ENCODE measurements at regions of chr5 and their contacts with region 1.

Region 1: GRCh38 chr5:139863855-139864558 is 68.4 kb downstream of the PSD2 start:
- DNase-seq: peak; percentile 12
- H3K4me3 ChIP-seq: no peak overlapping the region
- H3K27ac ChIP-seq: no peak overlapping the region
- H3K4me1 ChIP-seq: peaks cover 10% of the 10 kb centered on the region
- H3K27me3 ChIP-seq: no peaks in the 10 kb centered on the region
- CTCF ChIP-seq: peak; percentile 82 to 92

Region 2: DNA sequence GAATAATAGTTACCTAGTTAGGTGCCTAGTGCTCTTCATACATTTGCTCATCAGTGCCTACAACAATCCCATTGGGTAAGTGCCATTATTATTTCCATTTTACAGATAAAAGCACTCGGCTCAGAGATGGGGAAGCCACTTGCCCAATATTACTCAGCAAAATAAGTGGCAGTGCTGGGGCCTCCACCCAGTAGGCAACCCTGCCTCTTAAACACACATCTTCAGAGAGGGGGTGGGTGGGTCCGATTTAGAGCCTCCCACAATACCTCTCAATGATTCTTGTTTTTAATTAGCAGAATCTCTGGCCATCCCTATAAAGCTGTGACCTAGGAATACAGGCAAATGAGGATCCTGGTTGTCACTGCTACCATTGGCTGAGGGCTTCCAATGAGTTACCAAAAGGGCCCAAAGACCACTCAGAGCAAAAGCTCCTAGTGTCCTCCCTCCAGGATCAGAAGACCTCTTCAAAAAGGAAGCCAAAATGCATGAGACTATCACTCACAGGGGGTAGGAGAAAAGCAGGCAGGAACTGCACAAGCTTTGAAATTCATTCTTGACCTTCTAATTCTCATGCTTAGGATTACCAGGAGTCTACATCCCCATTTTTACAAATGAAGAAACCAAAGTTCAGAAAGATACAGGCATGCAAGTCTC is 338.9 kb before region 1 on chr5:
- CTCF ChIA-PET with region 1: no interaction called
- dilution Hi-C with region 1: no loop called
- in situ Hi-C with region 1: no loop called
- intact Hi-C with region 1: no loop called
- DNase-seq: no peak
- H3K4me3 ChIP-seq: no peak overlapping the region
- H3K27ac ChIP-seq: no peak overlapping the region
- H3K4me1 ChIP-seq: no peaks in the 10 kb centered on the region
- H3K27me3 ChIP-seq: no peaks in the 10 kb centered on the region
- CTCF ChIP-seq: no peak

Region 3: DNA sequence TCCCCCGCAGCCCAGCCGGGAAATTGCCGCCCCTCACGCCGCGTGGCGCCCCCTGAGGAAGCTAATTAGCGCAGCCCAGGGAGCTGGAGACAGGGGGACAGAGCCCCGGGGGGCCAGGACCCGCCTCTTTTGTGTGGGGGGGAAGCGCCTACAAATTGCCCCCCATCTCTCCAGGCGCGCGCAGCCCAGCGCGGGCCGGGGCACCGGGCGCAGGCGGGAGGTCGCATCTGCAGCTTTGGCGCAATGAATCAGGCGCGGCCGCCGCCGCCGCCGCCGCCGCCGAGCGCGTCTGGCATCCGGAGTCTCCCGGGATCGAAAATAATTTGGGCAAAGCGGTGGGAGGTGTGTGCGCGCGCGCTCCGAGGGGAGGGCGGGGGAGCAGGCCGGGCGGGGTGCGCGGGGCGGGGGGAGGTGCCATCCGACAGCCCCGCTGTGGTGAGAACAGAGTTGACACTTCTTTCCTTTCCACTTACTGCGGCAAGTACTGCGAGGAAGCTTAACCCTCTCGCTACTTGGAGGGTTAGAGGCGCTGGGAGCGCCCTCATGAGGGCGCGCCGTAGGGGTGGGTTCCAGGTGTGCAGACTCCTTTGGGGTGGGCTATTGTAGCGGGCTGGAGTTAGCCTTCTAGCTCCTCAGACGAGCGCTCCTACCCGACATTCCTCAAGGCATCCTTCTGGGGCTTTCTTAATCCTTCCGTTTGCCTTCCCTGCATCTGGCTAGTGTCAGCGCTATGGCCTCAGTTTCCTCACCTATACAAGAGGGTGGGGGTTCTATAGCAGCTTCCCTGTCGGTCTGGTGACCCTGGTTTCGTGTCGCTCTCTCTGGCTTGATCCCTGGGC is 152.7 kb before region 1 on chr5:
- CTCF ChIA-PET with region 1: interaction called, 15 read pairs
- dilution Hi-C with region 1: no loop called
- in situ Hi-C with region 1: no loop called
- intact Hi-C with region 1: no loop called
- DNase-seq: peak; percentile 38
- H3K4me3 ChIP-seq: peak overlapping the region; percentile 42 to 51 (median 46)
- H3K27ac ChIP-seq: no peak overlapping the region
- H3K4me1 ChIP-seq: peaks cover 11% of the 10 kb centered on the region
- H3K27me3 ChIP-seq: no peaks in the 10 kb centered on the region
- CTCF ChIP-seq: no peak

Region 4: GRCh38 chr5:139975306-139975705 is 111.3 kb after region 1 on chr5:
- CTCF ChIA-PET with region 1: no interaction called
- dilution Hi-C with region 1: no loop called
- in situ Hi-C with region 1: no loop called
- intact Hi-C with region 1: no loop called
- DNase-seq: no peak
- H3K4me3 ChIP-seq: no peak overlapping the region
- H3K27ac ChIP-seq: no peak overlapping the region
- H3K4me1 ChIP-seq: no peaks in the 10 kb centered on the region
- H3K27me3 ChIP-seq: no peaks in the 10 kb centered on the region
- CTCF ChIP-seq: no peak

Region 5: DNA sequence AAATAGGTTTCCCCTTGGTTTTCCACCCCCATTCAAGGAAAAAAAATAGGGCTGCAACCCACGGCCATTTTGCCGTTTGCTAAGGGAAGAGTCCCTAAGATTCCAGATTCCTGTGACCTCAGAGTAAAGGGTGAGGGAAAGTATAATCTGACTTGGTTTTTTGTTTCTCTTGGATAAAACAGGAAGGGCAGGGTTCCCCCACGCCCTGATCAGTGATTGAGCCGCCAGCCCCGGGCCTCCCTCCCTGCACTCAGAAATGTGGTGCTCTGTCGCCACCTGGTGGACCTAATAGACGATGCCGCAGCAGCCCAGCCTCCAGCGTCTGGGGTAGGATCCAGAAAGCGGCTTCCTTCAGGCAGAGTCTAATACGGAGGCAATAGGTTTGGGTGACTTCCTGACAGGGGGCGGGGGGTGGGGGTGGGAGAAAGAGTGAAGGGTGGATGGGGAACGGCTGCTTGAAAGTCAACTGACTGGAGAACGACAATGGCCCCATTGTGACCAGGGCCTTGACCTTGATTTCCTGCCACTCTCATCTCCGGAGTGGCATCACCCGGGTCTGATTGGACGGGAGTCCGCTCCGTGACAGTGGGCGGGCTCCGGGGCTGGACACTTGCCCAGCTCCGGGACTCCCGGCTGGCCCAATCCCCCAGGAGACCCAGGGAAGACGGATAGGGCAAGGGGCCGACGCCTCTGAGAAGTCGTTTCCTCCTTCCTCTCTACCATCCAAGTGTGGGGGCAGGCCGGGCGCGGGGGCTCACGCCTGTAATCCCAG is 293.2 kb after region 1 on chr5:
- CTCF ChIA-PET with region 1: no interaction called
- dilution Hi-C with region 1: no loop called
- in situ Hi-C with region 1: no loop called
- intact Hi-C with region 1: loop called (anchors 10 kb)
- DNase-seq: peak; percentile 66
- H3K4me3 ChIP-seq: peak overlapping the region in 2 of 3 experiments; percentile 23 to 41
- H3K27ac ChIP-seq: peak overlapping the region; percentile 9
- H3K4me1 ChIP-seq: peaks cover 8% of the 10 kb centered on the region
- H3K27me3 ChIP-seq: no peaks in the 10 kb centered on the region
- CTCF ChIP-seq: peak; percentile 73 to 90

Region 6: GRCh38 chr5:140672455-140673186 is 808.6 kb after region 1 on chr5:
- CTCF ChIA-PET with region 1: no interaction called
- dilution Hi-C with region 1: no loop called
- in situ Hi-C with region 1: no loop called
- intact Hi-C with region 1: no loop called
- DNase-seq: no peak
- H3K4me3 ChIP-seq: no peak overlapping the region
- H3K27ac ChIP-seq: no peak overlapping the region
- H3K4me1 ChIP-seq: no peaks in the 10 kb centered on the region
- H3K27me3 ChIP-seq: no peaks in the 10 kb centered on the region
- CTCF ChIP-seq: no peak